ENCODE measurements at regions of chr1 and their contacts with region 1.

Region 1: GRCh38 chr1:27547220-27548116 is 56.5 kb downstream of the AHDC1 start:
- DNase-seq: no peak
- H3K4me3 ChIP-seq: no peak overlapping the region
- H3K27ac ChIP-seq: no peak overlapping the region
- H3K4me1 ChIP-seq: no peaks in the 10 kb centered on the region
- H3K27me3 ChIP-seq: no peaks in the 10 kb centered on the region
- CTCF ChIP-seq: no peak

Region 2: DNA sequence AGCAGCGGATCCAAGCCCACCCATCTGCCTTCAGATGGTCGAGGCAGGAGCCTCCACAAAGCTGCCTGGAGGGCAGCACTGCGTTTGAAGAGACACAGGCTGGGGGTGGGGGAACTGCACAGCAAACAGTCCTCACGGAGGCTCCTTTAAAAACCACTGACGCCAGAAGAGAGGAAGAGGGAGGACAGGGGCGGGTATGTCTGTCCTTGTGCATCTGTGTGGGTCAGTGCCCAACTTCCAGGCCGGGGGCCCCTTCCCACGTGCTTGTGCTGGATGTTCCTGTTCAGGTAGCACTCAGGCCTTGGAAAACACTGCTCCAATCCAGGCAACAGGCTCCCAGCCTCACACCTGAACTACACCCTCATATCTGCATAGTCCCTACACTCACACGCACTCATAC is 48.8 kb after region 1 on chr1:
- CTCF ChIA-PET with region 1: no interaction called
- POLR2A ChIA-PET with region 1: interaction called, 13 read pairs
- intact Hi-C with region 1: no loop called
- DNase-seq: no peak
- H3K4me3 ChIP-seq: no peak overlapping the region
- H3K27ac ChIP-seq: peak overlapping the region; percentile 30
- H3K4me1 ChIP-seq: peaks cover 84% of the 10 kb centered on the region
- H3K27me3 ChIP-seq: no peaks in the 10 kb centered on the region
- CTCF ChIP-seq: no peak